Posterior vena cava (tissue), 2 donors: ENCODE measurements at regions of chr12 and their contacts with region 1.

Region 1: DNA sequence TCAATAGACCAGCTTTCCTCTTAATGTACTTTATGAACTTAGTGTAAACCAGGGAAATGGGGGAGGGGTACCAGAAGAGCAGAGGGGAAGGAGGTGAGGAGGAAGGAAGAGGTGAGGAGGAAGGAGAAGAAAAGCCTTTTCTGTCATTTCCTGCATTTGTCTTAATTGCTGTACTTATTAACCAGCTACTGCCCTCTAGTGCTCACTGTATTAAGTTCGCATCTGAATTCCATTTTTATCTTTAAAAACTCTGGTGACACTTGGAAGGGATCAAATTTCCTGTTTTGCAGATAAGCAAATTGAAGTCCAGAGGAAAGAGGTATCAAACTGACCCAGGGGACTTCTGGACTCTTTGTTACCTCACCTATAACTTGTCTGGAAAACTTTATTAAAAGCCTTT is 22.2 kb downstream of the MANSC1 start:
- DNase-seq: no peak

Region 2: DNA sequence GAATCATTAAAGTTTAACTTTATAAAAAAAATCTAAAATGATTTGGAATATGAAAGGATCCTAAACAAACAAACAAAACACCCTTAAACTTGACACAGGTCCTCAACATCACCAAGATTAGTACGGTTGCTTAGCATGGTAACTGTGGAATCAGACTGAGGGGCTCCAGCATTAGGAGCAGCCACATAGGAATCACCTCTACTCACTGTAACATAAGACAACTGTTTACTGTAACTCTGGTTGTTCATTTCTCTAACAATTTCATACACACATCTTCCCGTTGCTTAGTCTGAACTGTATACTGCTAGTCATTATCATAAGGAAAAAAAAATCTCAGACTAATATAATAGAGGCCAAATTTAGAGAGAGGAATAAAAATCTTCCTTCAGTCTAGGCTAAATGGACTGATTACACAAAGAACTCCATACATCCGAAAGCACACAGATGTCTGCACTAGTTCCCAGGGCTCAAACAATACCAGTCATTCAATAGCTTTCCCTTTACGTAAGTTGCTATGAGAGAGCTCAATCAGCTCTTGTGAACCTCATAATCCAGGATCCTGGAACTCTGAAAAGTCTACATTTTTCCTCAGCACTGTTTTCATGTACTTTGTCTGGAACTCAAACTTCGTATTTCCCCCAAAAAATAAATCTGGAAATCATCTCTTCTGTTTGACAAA is 87.0 kb before region 1 on chr12:
- intact Hi-C with region 1: no loop called
- DNase-seq: no peak

Region 3: DNA sequence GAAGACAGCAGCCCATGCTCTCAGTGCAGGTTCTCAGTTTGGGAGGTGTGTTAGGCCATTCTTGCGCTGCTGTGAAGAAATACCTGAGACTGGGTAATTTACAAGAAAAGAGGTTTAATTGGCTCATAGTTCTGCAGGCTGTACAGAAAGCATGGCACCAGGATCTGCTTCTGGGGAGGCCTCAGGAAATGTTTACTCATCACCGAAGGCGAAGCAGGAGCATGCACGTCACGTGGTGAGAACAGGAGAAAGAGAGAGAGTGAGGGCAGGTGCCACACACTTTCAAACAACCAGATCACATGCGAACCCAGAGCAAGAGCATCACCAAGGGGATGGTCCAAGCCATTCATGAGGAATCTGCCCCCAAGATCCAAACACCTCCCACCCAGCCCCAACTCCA is 51.9 kb before region 1 on chr12:
- intact Hi-C with region 1: loop called in 1 of 2 experiments (anchors 2 kb)
- DNase-seq: no peak